ENCODE measurements at regions of chr12 and their contacts with region 1.

Region 1: DNA sequence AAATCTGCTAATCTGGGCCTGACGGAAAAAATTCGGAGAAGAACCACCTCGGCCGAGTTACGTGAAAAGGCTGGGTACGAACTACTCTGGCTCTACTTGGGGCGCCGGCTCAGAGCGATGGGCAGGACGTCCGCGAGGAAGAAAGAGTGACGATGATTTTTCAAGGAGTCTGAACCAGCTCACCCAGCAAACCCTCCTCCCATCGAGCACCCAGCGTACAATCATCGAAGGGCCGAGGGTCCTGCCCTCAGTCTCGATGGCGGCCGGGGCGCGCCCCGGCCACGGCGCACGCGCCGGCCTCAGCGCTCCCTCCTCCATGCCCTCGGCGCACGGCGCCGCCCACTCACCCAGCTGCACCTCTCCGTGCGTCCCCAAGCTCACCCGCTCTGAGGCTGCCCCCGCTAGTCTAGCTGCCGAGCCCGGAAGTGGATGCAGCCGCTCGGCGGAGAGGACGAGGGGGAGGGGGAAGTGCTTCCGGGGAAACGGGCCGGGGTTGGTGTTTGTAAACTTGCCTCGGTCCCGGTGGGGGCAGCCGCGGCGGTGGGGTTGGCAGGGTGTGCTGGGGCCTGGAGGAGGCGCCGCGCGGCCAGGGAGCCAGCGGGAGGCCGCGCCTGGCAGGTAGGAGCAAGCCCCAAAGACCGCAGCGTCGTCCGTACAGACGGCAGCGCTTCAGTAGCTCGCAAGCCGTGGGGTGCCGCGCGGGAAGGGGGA is at the starts of genes CSAD and ZNF740:
- DNase-seq: peak; percentile 99
- H3K4me3 Mint-ChIP-seq: peak within 1 kb of the TSS; percentile 96
- H3K27ac Mint-ChIP-seq: peak within 1 kb of the TSS; percentile 95
- H3K4me1 Mint-ChIP-seq: peaks cover 48% of the 10 kb centered on the region
- H3K27me3 Mint-ChIP-seq: no peaks in the 10 kb centered on the region
- total RNA-seq, gene CSAD: 21.6 and 25.6 TPM in 2 replicates
- total RNA-seq, gene ZNF740: 44.0 and 50.5 TPM in 2 replicates

Region 2: DNA sequence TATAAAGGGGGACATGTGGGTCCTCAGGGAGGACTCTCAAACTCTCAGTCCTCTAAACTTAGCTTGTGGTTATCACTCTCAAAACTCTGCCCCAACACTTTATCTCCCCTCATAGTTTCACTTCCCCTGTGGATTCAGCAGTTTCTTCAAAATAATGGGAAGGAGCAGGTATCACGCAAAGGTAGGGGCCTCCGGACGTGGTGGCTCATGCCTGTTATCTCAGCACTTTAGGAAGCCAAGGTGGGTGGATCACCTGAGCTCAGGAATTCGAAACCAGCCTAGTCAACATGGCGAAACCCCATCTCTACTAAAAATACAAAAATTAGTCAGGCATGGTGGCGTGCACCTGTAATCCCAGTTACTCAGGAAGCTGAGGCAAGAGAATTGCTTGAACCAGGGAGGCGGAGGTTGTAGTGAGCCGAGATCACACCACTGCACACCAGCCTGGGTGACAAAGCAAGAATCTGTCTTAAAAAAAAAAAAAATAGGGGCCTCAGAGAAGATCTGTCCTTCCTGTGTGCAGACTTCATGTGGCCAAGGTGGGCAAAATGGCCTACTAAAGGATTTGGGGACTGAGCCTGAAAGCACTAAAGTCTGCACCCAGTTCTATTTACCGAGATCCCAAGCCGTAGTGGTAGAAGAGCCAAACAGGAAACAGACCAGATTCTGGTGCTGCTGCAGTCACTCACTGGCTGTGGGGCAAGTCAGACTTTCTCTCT is 20.2 kb after region 1 on chr12:
- intact Hi-C with region 1: loop called (anchors 2 kb)
- DNase-seq: peak; percentile 77
- H3K4me3 Mint-ChIP-seq: peak overlapping the region; percentile 77
- H3K27ac Mint-ChIP-seq: peak overlapping the region; percentile 85
- H3K4me1 Mint-ChIP-seq: peaks cover 53% of the 10 kb centered on the region
- H3K27me3 Mint-ChIP-seq: no peaks in the 10 kb centered on the region

Region 3: DNA sequence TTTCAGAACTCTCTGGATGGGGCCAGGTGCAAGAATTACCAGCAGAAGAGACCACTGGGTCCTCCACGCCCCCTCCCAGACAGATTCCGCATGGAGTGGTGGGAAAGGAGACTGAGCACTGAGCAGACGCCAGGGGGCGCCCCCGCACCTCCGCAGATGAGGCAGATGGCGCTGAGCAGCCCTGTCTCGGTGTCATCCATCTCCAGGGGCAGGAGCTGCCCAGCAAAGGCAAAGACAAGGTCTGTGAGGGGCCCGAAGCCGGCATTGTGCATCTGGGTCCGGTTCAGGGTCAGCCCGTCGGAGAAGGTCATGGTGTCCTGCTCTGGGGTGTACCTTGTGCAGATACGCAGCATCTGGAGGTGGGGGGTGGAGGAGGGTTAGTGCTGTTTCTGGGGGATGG is 33.0 kb after region 1 on chr12:
- intact Hi-C with region 1: no loop called
- DNase-seq: peak; percentile 95
- H3K4me3 Mint-ChIP-seq: peak overlapping the region; percentile 49
- H3K27ac Mint-ChIP-seq: peak overlapping the region; percentile 70
- H3K4me1 Mint-ChIP-seq: peaks cover 77% of the 10 kb centered on the region
- H3K27me3 Mint-ChIP-seq: no peaks in the 10 kb centered on the region

Region 4: GRCh38 chr12:53251477-53252348 is 71.3 kb after region 1 on chr12:
- intact Hi-C with region 1: loop called (anchors 2 kb)
- DNase-seq: peak; percentile 94
- H3K4me3 Mint-ChIP-seq: peak overlapping the region; percentile 95
- H3K27ac Mint-ChIP-seq: peak overlapping the region; percentile 93
- H3K4me1 Mint-ChIP-seq: peaks cover 41% of the 10 kb centered on the region
- H3K27me3 Mint-ChIP-seq: no peaks in the 10 kb centered on the region

Region 5: DNA sequence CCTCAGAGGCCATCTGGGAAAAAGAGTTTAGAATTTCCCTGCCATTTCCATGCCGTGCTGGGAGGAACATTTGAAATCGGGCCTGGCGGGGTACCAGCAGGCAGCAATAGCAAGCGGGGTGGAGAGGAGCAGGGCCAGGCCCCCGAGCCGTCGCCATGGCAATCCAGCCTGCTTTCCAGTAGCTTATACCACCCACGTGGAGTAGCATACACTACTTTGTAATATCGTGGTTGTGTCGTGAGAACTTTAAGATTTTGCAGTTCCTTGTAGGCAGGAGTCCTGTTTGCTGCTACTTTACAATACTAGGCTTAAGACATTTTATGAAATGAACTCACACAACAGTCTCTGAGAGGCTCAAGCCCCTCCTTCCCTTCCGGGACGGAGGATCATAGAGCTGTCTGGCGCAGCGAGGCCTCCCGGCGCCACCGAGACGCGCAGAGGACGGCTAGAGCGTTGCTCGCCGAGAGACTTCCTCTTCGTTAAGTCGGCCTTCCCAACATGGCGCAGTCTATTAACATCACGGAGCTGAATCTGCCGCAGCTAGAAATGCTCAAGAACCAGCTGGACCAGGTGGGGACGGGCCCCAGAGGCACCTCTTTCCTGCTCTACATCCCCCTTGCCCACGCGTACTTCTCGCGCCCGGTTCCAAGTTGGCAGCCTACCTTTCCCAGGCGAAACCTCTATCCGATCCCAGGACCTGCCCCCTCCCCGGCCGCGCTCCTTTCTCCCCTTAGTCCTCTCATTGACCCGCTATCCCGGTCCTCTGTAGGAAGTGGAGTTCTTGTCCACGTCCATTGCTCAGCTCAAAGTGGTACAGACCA is 114.9 kb after region 1 on chr12 and contains the start of gene PFDN5:
- intact Hi-C with region 1: loop called (anchors 1 kb)
- DNase-seq: peak; percentile 97
- H3K4me3 Mint-ChIP-seq: peak within 1 kb of the TSS; percentile 98
- H3K27ac Mint-ChIP-seq: peak within 1 kb of the TSS; percentile 90
- H3K4me1 Mint-ChIP-seq: peaks cover 33% of the 10 kb centered on the region
- H3K27me3 Mint-ChIP-seq: no peaks in the 10 kb centered on the region
- total RNA-seq, gene PFDN5: 319 and 342 TPM in 2 replicates

Region 6: GRCh38 chr12:53500776-53501614 is 320.6 kb after region 1 on chr12 and contains the start of gene TARBP2:
- intact Hi-C with region 1: loop called (anchors 1 kb)
- DNase-seq: peak; percentile 98
- H3K4me3 Mint-ChIP-seq: peak within 1 kb of the TSS; percentile 93
- H3K27ac Mint-ChIP-seq: peak within 1 kb of the TSS; percentile 97
- H3K4me1 Mint-ChIP-seq: peaks cover 35% of the 10 kb centered on the region
- H3K27me3 Mint-ChIP-seq: no peaks in the 10 kb centered on the region
- total RNA-seq, gene TARBP2: 49.7 and 52.2 TPM in 2 replicates

Measured in activated CD4-positive, alpha-beta T cell treated with anti-CD3 and anti-CD28 coated beads, Interleukin-2, amount 10 ng/mL, durations not matched to agents 24 days and 14 days (primary cell).